Lower leg skin (tissue), 4 donors: ENCODE measurements at regions of chr18 and their contacts with region 1.

Region 1: GRCh38 chr18:78255013-78255412 is 724.6 kb upstream of the SALL3 start:
- DNase-seq: no peak
- H3K4me3 ChIP-seq: no peak overlapping the region
- CTCF ChIP-seq: no peak
- POLR2A ChIP-seq: no peak

Region 2: DNA sequence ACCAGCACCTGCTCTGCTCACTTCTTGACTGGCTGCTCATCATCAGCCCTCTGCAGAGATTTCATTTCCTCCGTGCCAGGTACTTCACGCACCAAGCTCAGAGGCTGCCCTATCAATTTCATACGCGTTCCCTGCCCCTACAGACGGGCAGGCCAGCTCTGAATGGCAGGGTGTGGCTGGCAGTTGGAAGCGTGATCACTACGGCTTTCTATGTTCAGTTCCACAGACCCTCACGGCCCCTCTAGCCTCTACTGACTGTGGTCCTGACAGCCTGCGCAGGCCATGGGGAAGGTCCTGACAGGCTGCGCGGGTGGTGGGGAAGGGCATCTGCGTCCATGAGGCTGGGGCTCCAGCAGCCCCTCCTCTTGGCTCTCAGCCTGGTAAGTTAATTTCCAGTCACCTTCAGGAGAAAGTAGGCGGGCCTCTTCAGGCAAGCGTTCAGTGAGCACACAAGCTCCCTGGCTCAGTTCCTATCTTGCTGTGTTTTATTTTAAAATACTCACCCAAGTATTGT is 1277.8 kb before region 1 on chr18:
- intact Hi-C with region 1: no loop called
- DNase-seq: peak in 1 of 2 donors; percentile 57
- H3K4me3 ChIP-seq: no peak overlapping the region
- CTCF ChIP-seq: no peak
- POLR2A ChIP-seq: no peak

Region 3: DNA sequence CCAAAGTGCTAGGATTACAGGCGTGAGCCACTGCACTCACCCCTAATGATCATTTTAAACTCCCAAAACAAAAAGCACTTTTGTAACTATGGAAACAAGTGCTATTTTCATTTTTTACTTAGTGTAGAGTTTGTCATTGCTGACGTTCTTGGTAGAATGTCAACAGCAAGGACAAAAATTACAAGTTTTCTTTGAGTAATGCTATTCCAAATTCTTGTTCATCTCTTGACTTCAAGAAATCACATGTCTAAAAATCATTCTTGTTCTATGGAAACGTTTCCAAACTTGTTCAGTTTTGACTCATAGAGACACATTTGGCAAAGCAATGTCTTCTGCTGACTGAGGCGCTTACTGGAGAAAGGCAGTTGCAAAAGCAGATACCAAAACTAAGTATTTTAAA is 1205.1 kb before region 1 on chr18:
- intact Hi-C with region 1: loop called (anchors 5 kb)
- DNase-seq: no peak
- H3K4me3 ChIP-seq: no peak overlapping the region
- CTCF ChIP-seq: no peak
- POLR2A ChIP-seq: no peak